PC-9 (cell line): ENCODE measurements at regions of chrX and their contacts with region 1.

Region 1: GRCh38 chrX:102712216-102712951 is at the start of gene GPRASP2:
- DNase-seq: peak in 1 of 2 experiments; percentile 31
- H3K4me3 ChIP-seq: peak within 1 kb of the TSS; percentile 65
- H3K27ac ChIP-seq: no peak within 1 kb of the TSS
- H3K4me1 ChIP-seq: no peaks in the 10 kb centered on the region
- H3K27me3 ChIP-seq: no peaks in the 10 kb centered on the region
- CTCF ChIP-seq: no peak
- total RNA-seq, gene GPRASP2: 5.3 and 6.2 TPM in 2 replicates

Region 2: DNA sequence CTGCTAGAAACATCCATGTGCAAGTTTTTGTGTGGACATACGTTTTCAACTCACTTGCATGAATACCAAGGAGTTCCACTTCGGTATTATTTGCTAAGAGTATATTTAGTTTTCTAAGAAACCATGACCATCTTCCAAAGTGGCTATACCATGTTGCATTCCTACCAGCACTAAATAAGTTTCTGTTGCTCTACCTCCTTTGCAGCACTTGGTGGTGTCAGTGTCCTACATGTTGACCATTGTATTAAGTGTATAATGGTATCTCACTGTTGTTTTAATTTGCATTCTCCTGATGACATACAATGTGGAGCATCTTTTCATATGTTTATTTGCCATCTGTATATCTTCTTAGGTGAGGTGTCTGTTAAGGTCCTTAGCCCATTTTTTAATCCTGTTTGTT is 69.1 kb before region 1 on chrX:
- CTCF ChIA-PET with region 1: no interaction called
- POLR2A ChIA-PET with region 1: no interaction called
- intact Hi-C with region 1: loop called (anchors 10 kb)
- DNase-seq: no peak
- H3K4me3 ChIP-seq: no peak overlapping the region
- H3K27ac ChIP-seq: no peak overlapping the region
- H3K4me1 ChIP-seq: no peaks in the 10 kb centered on the region
- H3K27me3 ChIP-seq: no peaks in the 10 kb centered on the region
- CTCF ChIP-seq: no peak